Activated CD4-positive, alpha-beta T cell treated with anti-CD3 and anti-CD28 coated beads for 36 hours (primary cell): ENCODE measurements at regions of chr16 and their contacts with region 1.

Region 1: GRCh38 chr16:26058326-26058725 is 366.6 kb downstream of the HS3ST4 start:
- DNase-seq: no peak
- ATAC-seq: no peak
- H3K4me3 Mint-ChIP-seq: no peak overlapping the region
- H3K27ac Mint-ChIP-seq: no peak overlapping the region
- H3K4me1 Mint-ChIP-seq: no peaks in the 10 kb centered on the region
- H3K27me3 Mint-ChIP-seq: peaks cover 11% of the 10 kb centered on the region

Region 2: DNA sequence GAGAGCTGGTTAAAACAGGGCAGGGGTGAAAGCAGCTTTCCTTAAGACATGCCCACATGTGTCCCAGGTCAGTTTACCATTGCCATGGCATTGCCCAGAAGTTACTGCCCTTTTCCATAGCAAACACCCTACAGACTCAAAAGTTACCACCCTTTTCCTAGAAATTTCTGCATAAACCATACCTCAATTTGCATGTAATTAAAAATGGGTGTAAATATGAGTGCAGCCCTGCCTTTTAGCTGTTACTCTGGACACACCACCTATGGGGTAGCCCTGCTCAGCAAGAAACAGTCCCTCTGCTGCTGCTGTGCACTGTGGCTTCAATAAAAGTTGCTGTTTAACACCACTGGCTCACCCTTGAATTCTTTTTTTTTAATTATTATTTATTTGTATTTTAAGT is 839.9 kb after region 1 on chr16:
- CTCF ChIA-PET with region 1: no interaction called
- POLR2A ChIA-PET with region 1: no interaction called
- intact Hi-C with region 1: loop called in 1 of 2 experiments (anchors 5 kb)
- DNase-seq: no peak
- ATAC-seq: no peak
- H3K4me3 Mint-ChIP-seq: no peak overlapping the region
- H3K27ac Mint-ChIP-seq: no peak overlapping the region
- H3K4me1 Mint-ChIP-seq: no peaks in the 10 kb centered on the region
- H3K27me3 Mint-ChIP-seq: peaks cover 25% of the 10 kb centered on the region